Dendritic cell treated with granulocyte-macrophage colony-stimulating factor and Interleukin-4, amounts not matched to agents 40 ng/mL and 50 ng/mL, for 4 days (primary cell): ENCODE measurements at regions of chr4 and their contacts with region 1.

Region 1: GRCh38 chr4:170027181-170027829 is 1.1 kb upstream of the MFAP3L start:
- H3K4me3 Mint-ChIP-seq: peak overlapping the region; percentile 80
- H3K27ac Mint-ChIP-seq: peak overlapping the region; percentile 81
- H3K4me1 Mint-ChIP-seq: peaks cover 16% of the 10 kb centered on the region
- H3K27me3 Mint-ChIP-seq: peaks cover 80% of the 10 kb centered on the region

Region 2: DNA sequence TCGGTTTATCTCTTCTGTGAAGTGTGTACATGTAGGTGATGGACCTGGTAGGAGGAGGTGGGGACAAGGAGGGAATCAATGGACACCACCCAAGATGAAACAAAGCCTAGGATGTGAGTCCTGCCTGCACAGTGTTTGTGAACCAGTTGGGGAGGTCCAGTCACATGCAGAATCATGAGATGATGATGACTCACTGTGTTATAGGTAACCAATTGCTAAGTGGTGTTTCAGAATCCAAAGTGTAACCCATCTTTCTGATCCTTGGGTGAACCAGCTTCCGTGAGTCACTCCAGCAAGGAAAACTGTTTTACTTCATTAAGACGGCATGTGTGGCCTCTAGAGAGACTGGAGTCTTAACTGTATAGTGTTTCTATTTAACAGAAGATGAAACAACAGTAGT is 211.7 kb before region 1 on chr4:
- intact Hi-C with region 1: no loop called
- H3K4me3 Mint-ChIP-seq: no peak overlapping the region
- H3K27ac Mint-ChIP-seq: no peak overlapping the region
- H3K4me1 Mint-ChIP-seq: no peaks in the 10 kb centered on the region
- H3K27me3 Mint-ChIP-seq: peaks cover 5% of the 10 kb centered on the region

Region 3: DNA sequence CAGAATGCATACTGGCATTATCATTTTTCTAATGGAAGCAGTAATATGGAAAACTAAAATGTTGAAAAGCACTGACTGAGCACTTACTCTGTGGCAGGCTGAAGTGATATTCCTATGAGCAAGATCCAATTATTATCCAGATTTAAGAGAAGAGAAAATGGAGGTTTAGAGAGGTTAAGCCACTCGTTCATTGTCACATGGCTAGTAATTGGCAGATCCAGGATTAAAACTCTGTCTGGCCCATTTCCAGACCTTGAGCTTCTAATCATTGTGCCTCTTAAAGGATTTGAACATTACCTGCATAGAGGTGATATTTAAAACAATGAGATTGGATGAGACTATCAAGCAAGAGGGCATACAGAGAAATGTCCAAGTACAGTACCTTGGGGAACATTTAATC is 81.7 kb before region 1 on chr4:
- intact Hi-C with region 1: loop called (anchors 5 kb)
- H3K4me3 Mint-ChIP-seq: no peak overlapping the region
- H3K27ac Mint-ChIP-seq: no peak overlapping the region
- H3K4me1 Mint-ChIP-seq: no peaks in the 10 kb centered on the region
- H3K27me3 Mint-ChIP-seq: peaks cover 89% of the 10 kb centered on the region

Region 4: GRCh38 chr4:170057866-170058265 is 30.6 kb after region 1 on chr4:
- intact Hi-C with region 1: no loop called
- H3K4me3 Mint-ChIP-seq: no peak overlapping the region
- H3K27ac Mint-ChIP-seq: no peak overlapping the region
- H3K4me1 Mint-ChIP-seq: no peaks in the 10 kb centered on the region
- H3K27me3 Mint-ChIP-seq: no peaks in the 10 kb centered on the region